A549 (cell line): ENCODE measurements at regions of chr16 and their contacts with region 1.

Region 1: GRCh38 chr16:8885674-8886592 is 3.8 kb downstream of the LITAFD start:
- DNase-seq: no peak
- ATAC-seq: peak; percentile 32 to 41
- H3K4me3 ChIP-seq: no peak overlapping the region
- H3K27ac ChIP-seq: peak overlapping the region in 1 of 2 experiments; percentile 78; a peak in 3 of 6 replicates
- H3K4me1 ChIP-seq: peaks cover 23% of the 10 kb centered on the region
- CTCF ChIP-seq: no peak
- EP300 ChIP-seq: no peak
- POLR2A ChIP-seq: no peak
- RAD21 ChIP-seq: no peak

Region 2: DNA sequence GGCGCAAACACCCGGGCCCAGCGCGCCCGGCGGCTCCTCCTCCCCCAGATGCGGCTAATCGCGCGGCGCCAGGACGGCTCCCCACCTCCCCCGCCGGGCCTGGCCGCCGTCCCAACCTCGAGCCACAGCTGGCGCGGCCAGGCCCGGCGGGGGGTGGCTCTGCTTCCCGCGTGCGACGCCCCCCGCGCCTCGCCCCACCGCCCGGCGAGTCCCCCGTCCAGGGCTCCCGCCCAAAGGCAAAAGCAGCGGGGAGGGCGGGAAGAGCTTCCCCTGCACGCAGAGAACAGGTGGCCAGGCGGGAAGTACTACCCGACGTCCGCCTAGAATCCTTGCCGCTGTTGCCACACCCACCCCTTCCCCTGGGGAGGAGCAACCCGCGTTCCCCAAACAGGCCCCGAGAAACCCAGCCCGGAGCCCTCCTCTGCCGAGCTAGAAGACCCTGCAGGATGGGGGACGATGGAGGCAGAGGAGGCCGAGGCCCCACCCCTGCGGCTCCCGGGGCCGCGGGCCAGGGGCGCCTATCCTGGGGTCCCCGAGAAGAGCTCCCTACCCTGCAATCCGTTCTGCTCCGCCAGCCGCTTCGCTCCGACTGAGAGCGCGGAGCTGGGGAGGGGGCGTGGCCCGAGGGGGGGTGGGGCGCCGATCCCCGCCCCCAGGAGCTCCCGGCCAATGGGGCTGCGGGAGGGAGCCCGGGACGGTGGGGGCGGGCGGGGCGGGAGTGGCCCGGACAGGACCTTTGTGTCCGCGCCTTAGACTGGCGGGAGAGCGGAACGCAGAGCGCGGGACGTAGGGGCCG is 17.3 kb before region 1 on chr16 and contains the start of gene CARHSP1:
- CTCF ChIA-PET with region 1: interaction called, 84 read pairs
- POLR2A ChIA-PET with region 1: interaction called, 13 read pairs
- DNase-seq: peak; percentile 91 to 92
- ATAC-seq: peak; percentile 67 to 85
- H3K4me3 ChIP-seq: peak within 1 kb of the TSS; percentile 60
- H3K27ac ChIP-seq: peak within 1 kb of the TSS; percentile 91 to 94
- H3K4me1 ChIP-seq: peaks cover 69% of the 10 kb centered on the region
- CTCF ChIP-seq: no peak
- EP300 ChIP-seq: no peak
- POLR2A ChIP-seq: peak; percentile 53
- RAD21 ChIP-seq: 0 out of 5 replicates have a peak, but pooled peaks of 1 of the 2 experiments have one; percentile 7
- polyA plus RNA-seq, gene CARHSP1: 47.8 and 53.9 TPM in 2 replicates

Region 3: GRCh38 chr16:8963825-8964441 is 78.0 kb after region 1 on chr16 and contains the start of gene USP7:
- CTCF ChIA-PET with region 1: no interaction called
- POLR2A ChIA-PET with region 1: no interaction called
- DNase-seq: peak; percentile 78 to 90
- ATAC-seq: peak; percentile 93 to 97
- H3K4me3 ChIP-seq: peak within 1 kb of the TSS; percentile 92
- H3K27ac ChIP-seq: peak within 1 kb of the TSS; percentile 89 to 96
- H3K4me1 ChIP-seq: peaks cover 44% of the 10 kb centered on the region
- CTCF ChIP-seq: 0 out of 3 replicates have a peak, but pooled peaks have one; percentile 12
- EP300 ChIP-seq: no peak
- POLR2A ChIP-seq: peak; percentile 57
- RAD21 ChIP-seq: no peak
- polyA plus RNA-seq, gene USP7: 39.6 and 78.6 TPM in 2 replicates

Region 4: GRCh38 chr16:8975039-8975438 is 89.1 kb after region 1 on chr16:
- CTCF ChIA-PET with region 1: no interaction called
- POLR2A ChIA-PET with region 1: no interaction called
- DNase-seq: no peak
- ATAC-seq: no peak
- H3K4me3 ChIP-seq: no peak overlapping the region
- H3K27ac ChIP-seq: no peak overlapping the region
- H3K4me1 ChIP-seq: no peaks in the 10 kb centered on the region
- CTCF ChIP-seq: no peak
- EP300 ChIP-seq: no peak
- POLR2A ChIP-seq: no peak
- RAD21 ChIP-seq: no peak